ENCODE measurements at regions of chr17 and their contacts with region 1.

Region 1: DNA sequence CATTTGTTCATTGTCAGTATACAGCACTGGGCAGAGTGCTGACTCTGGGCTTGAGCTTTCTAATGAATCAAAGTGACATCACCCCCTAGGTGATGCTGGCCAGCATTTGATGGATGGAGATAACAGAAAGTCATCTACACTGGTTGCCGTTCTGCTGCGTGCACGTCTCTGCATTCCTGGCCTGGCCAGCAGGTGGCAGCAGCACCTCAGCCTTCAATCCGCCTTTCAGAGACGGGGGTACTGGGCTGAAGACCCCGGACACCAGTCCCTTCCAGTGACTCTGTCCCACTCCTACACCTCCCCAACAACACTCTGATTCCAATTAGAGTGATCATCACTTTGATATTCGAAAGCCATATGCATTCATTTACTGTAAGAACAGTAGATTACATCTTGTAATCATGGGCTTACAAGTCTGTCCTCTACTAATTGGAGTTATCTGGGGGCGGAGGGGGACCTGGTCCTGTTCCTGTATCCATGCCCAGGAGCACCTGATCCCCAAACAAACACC is 6.0 kb downstream of the CPSF4L start:
- DNase-seq: peak; percentile 53
- H3K4me3 ChIP-seq: no peak overlapping the region
- H3K27ac ChIP-seq: no peak overlapping the region
- H3K4me1 ChIP-seq: no peaks in the 10 kb centered on the region
- H3K27me3 ChIP-seq: no peaks in the 10 kb centered on the region
- CTCF ChIP-seq: peak; percentile 97

Region 2: GRCh38 chr17:73371285-73371684 is 115.6 kb after region 1 on chr17:
- CTCF ChIA-PET with region 1: interaction called, 34 read pairs
- POLR2A ChIA-PET with region 1: no interaction called
- intact Hi-C with region 1: loop called (anchors 1 kb)
- DNase-seq: peak; percentile 60
- H3K4me3 ChIP-seq: no peak overlapping the region
- H3K27ac ChIP-seq: no peak overlapping the region
- H3K4me1 ChIP-seq: no peaks in the 10 kb centered on the region
- H3K27me3 ChIP-seq: no peaks in the 10 kb centered on the region
- CTCF ChIP-seq: no peak

Measured in A673 (cell line).